ENCODE measurements at regions of chr17 and their contacts with region 1.

Region 1: GRCh38 chr17:51259564-51260124 is at the start of gene MBTD1:
- DNase-seq: peak; percentile 97
- H3K4me3 ChIP-seq: peak within 1 kb of the TSS; percentile 54
- H3K27ac ChIP-seq: peak within 1 kb of the TSS; percentile 79
- H3K4me1 ChIP-seq: peaks cover 18% of the 10 kb centered on the region
- H3K27me3 ChIP-seq: no peaks in the 10 kb centered on the region
- CTCF ChIP-seq: no peak
- total RNA-seq, gene MBTD1: 11.3 to 14.9 TPM

Region 2: DNA sequence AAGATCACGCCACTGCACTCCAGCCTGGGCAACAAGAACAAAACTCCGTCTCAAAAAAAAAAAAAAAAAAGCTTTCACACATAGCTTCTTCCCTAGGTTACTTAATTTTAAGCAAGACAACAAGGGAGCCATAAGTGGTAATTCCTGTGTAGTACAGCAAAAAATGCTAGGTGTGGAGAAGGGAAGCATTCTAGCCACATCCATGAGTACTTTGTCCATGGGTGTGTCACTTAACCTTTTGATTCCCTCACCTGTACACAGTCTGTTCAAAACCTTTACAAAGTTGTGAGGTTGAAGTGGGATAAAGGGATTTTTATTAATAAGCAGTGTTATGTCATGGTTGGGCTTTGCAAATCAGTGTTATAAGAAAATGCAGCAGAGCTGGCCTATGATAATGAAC is 88.9 kb before region 1 on chr17:
- intact Hi-C with region 1: loop called (anchors 10 kb)
- DNase-seq: no peak
- H3K4me3 ChIP-seq: no peak overlapping the region
- H3K27ac ChIP-seq: no peak overlapping the region
- H3K4me1 ChIP-seq: no peaks in the 10 kb centered on the region
- H3K27me3 ChIP-seq: no peaks in the 10 kb centered on the region
- CTCF ChIP-seq: no peak